Lower lobe of right lung (tissue), 2 donors: ENCODE measurements at regions of chr17 and their contacts with region 1.

Region 1: GRCh38 chr17:29369831-29370735 is 20.1 kb upstream of the TAOK1 start:
- DNase-seq: no peak
- ATAC-seq: peak; percentile 93
- H3K4me3 ChIP-seq: peak overlapping the region; percentile 27
- H3K27ac ChIP-seq: peak overlapping the region; percentile 59
- H3K4me1 ChIP-seq: no peaks in the 10 kb centered on the region
- H3K27me3 ChIP-seq: no peaks in the 10 kb centered on the region
- CTCF ChIP-seq: peak; percentile 83

Region 2: DNA sequence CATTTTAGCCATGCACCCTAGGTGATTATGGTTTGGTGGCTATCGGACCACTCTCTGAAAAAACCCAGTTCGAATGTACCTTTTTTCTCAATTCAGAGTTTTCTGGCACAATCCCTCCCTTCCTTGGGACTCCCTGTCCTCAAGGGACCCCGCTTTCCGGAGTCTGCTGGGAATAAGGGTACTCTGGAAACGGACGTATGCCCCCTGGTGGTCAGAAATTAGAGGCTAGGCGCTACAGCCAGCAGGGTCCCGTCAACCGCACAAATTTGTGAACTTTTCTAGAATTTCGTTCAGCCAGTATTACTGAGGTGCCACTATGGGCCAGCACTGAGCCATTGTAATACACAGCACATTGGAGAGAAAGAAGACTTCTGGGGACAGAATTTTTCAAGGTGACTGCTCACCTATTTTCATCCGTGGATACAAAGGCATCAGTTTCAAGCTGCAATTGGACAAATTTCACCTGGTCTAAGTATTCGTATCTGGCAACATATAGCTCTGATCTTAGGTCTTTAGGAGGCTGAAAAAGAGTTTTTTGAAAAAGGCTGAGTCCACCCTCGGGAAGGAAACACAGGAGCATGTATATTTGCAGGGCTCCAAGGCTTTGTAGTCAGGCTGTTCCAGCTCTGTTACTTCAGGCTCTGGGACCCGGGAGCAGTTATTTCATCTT is 150.6 kb before region 1 on chr17:
- intact Hi-C with region 1: no loop called
- DNase-seq: peak; percentile 72
- ATAC-seq: peak; percentile 90
- H3K4me3 ChIP-seq: no peak overlapping the region
- H3K27ac ChIP-seq: no peak overlapping the region
- H3K4me1 ChIP-seq: peaks cover 9% of the 10 kb centered on the region
- H3K27me3 ChIP-seq: no peaks in the 10 kb centered on the region
- CTCF ChIP-seq: peak; percentile 96

Region 3: DNA sequence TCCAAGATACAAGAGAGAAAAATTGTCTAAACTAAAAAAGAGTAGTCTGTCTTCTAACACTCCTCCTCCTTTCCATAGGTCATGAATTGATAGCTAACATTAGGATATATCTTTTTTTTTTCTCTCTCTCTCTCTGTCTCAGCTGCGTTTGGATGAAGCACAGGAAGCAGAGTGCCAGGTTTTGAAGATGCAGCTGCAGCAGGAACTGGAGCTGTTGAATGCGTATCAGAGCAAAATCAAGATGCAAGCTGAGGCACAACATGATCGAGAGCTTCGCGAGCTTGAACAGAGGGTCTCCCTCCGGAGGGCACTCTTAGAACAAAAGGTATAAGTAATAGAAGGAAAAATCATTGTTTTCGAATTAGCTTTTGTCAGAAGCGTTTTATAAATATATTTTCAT is 163.9 kb after region 1 on chr17:
- intact Hi-C with region 1: loop called (anchors 10 kb)
- DNase-seq: no peak
- ATAC-seq: no peak
- H3K4me3 ChIP-seq: no peak overlapping the region
- H3K27ac ChIP-seq: no peak overlapping the region
- H3K4me1 ChIP-seq: no peaks in the 10 kb centered on the region
- H3K27me3 ChIP-seq: no peaks in the 10 kb centered on the region
- CTCF ChIP-seq: no peak